Activated naive CD4-positive, alpha-beta T cell treated with anti-CD3 and anti-CD28 coated beads for 36 hours (primary cell): ENCODE measurements at regions of chr2 and their contacts with region 1.

Region 1: GRCh38 chr2:232026910-232027309 is 65.4 kb downstream of the DIS3L2 start:
- DNase-seq: peak; percentile 9
- H3K4me3 Mint-ChIP-seq: no peak overlapping the region
- H3K27ac Mint-ChIP-seq: peak overlapping the region; percentile 74
- H3K4me1 Mint-ChIP-seq: peaks cover 30% of the 10 kb centered on the region
- H3K27me3 Mint-ChIP-seq: no peaks in the 10 kb centered on the region

Region 2: DNA sequence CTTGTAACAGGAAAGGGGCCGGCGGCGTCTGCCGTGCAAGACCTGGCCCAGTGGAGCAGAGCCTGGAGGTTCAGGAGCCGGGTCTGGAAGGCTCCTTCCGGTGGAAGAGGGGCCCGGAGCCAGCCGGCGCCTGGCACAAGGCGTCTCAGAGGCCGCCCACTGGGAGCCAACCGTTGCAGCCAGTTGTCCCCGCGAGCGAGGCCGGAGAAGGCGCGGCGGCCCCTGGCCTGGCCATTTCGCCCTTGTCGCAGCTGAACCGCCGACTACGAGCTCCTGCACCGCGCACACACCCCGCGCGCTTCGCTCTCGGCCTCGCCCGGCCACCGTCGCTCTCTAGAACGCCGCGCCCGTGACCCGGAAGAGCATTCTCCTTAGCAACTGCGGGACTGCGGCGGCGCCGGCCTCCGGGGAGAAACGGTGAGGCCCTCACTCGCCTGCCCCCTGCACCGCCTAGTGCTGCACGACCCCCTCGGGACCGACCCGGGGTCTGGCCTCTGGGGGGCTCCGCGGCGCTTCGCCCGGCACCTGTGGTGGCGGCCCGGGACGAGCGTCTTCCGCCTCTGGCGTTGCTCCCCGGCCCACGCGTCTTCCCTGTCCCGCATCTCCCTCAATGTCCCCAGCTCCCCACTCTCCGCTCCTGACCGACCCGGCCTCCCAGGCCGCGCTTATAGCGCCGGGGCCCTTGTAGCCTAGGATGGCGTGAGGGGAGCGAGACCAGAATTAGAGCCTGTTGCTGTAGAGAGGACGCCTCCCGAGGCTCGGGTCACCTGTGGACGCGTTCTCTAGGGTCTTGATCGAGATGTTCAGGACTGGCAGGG is 65.4 kb before region 1 on chr2 and contains the start of gene DIS3L2:
- CTCF ChIA-PET with region 1: no interaction called
- intact Hi-C with region 1: loop called (anchors 2 kb)
- DNase-seq: peak; percentile 82
- H3K4me3 Mint-ChIP-seq: peak within 1 kb of the TSS; percentile 84
- H3K27ac Mint-ChIP-seq: peak within 1 kb of the TSS; percentile 86
- H3K4me1 Mint-ChIP-seq: peaks cover 31% of the 10 kb centered on the region
- H3K27me3 Mint-ChIP-seq: no peaks in the 10 kb centered on the region
- total RNA-seq, gene DIS3L2: 32.4 to 35.3 TPM

Region 3: GRCh38 chr2:232042911-232043564 is 16.1 kb after region 1 on chr2:
- CTCF ChIA-PET with region 1: interaction called, 4 read pairs
- intact Hi-C with region 1: loop called (anchors 2 kb)
- DNase-seq: peak; percentile 13
- H3K4me3 Mint-ChIP-seq: no peak overlapping the region
- H3K27ac Mint-ChIP-seq: no peak overlapping the region
- H3K4me1 Mint-ChIP-seq: peaks cover 21% of the 10 kb centered on the region
- H3K27me3 Mint-ChIP-seq: no peaks in the 10 kb centered on the region

Region 4: GRCh38 chr2:232142049-232142448 is 115.1 kb after region 1 on chr2:
- CTCF ChIA-PET with region 1: interaction called, 3 read pairs
- intact Hi-C with region 1: loop called (anchors 1 kb)
- DNase-seq: peak; percentile 65
- H3K4me3 Mint-ChIP-seq: no peak overlapping the region
- H3K27ac Mint-ChIP-seq: no peak overlapping the region
- H3K4me1 Mint-ChIP-seq: peaks cover 37% of the 10 kb centered on the region
- H3K27me3 Mint-ChIP-seq: no peaks in the 10 kb centered on the region

Region 5: GRCh38 chr2:232315049-232315922 is 288.4 kb after region 1 on chr2:
- CTCF ChIA-PET with region 1: no interaction called
- intact Hi-C with region 1: loop called (anchors 1 kb)
- DNase-seq: peak; percentile 90
- H3K4me3 Mint-ChIP-seq: peak overlapping the region; percentile 61
- H3K27ac Mint-ChIP-seq: peak overlapping the region; percentile 92
- H3K4me1 Mint-ChIP-seq: peaks cover 70% of the 10 kb centered on the region
- H3K27me3 Mint-ChIP-seq: no peaks in the 10 kb centered on the region